Activated CD4-positive, alpha-beta memory T cell treated with anti-CD3 and anti-CD28 coated beads for 36 hours (primary cell): ENCODE measurements at regions of chr11 and their contacts with region 1.

Region 1: DNA sequence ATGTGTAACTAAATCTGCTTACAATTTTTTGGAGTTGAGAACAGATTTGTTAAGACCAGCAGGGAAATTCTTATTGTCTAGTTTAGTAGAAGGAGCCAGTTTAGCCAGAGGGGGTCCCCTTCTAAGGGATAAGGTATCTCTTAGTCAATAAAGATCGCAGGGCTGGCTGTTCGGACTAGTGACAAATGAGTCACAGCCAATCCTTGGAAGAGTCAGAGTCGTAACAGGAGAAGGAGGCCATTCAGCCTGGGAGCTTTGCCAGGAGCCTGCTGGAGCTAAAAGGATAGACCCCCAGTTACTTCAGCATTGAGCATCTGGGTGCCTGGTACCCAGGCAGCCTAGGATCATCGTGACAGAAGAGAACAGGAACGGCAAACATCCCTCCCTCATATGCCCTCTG is 191.6 kb upstream of the ARHGAP20 start:
- DNase-seq: no peak
- H3K4me3 Mint-ChIP-seq: no peak overlapping the region
- H3K27ac Mint-ChIP-seq: no peak overlapping the region
- H3K4me1 Mint-ChIP-seq: peaks cover 19% of the 10 kb centered on the region
- H3K27me3 Mint-ChIP-seq: peaks cover 2% of the 10 kb centered on the region

Region 2: GRCh38 chr11:110711776-110712658 is 191.8 kb before region 1 on chr11 and contains the start of gene ARHGAP20:
- CTCF ChIA-PET with region 1: no interaction called
- POLR2A ChIA-PET with region 1: no interaction called
- intact Hi-C with region 1: loop called (anchors 5 kb)
- DNase-seq: peak; percentile 61
- H3K4me3 Mint-ChIP-seq: peak within 1 kb of the TSS; percentile 47
- H3K27ac Mint-ChIP-seq: no peak within 1 kb of the TSS
- H3K4me1 Mint-ChIP-seq: peaks cover 12% of the 10 kb centered on the region
- H3K27me3 Mint-ChIP-seq: peaks cover 48% of the 10 kb centered on the region
- total RNA-seq, gene ARHGAP20: 0.05 TPM in 1 of 2 experiments, not detected in the other

Region 3: GRCh38 chr11:111026241-111026640 is 122.4 kb after region 1 on chr11:
- CTCF ChIA-PET with region 1: no interaction called
- POLR2A ChIA-PET with region 1: no interaction called
- intact Hi-C with region 1: no loop called
- DNase-seq: no peak
- H3K4me3 Mint-ChIP-seq: no peak overlapping the region
- H3K27ac Mint-ChIP-seq: no peak overlapping the region
- H3K4me1 Mint-ChIP-seq: no peaks in the 10 kb centered on the region
- H3K27me3 Mint-ChIP-seq: peaks cover 11% of the 10 kb centered on the region